Colonic mucosa (tissue), 4 donors: ENCODE measurements at regions of chr17 and their contacts with region 1.

Region 1: GRCh38 chr17:42428141-42428944 is 5.3 kb upstream of the CAVIN1 start:
- DNase-seq: peak; percentile 70
- H3K4me3 ChIP-seq: no peak overlapping the region
- H3K27ac ChIP-seq: no peak overlapping the region
- H3K4me1 ChIP-seq: no peaks in the 10 kb centered on the region
- H3K27me3 ChIP-seq: no peaks in the 10 kb centered on the region
- CTCF ChIP-seq: peak; percentile 74

Region 2: GRCh38 chr17:42484304-42484703 is 56.0 kb after region 1 on chr17:
- intact Hi-C with region 1: no loop called
- DNase-seq: peak; percentile 41
- H3K4me3 ChIP-seq: no peak overlapping the region
- H3K27ac ChIP-seq: no peak overlapping the region
- H3K4me1 ChIP-seq: no peaks in the 10 kb centered on the region
- H3K27me3 ChIP-seq: no peaks in the 10 kb centered on the region
- CTCF ChIP-seq: no peak

Region 3: GRCh38 chr17:42517516-42517915 is 89.2 kb after region 1 on chr17:
- intact Hi-C with region 1: loop called (anchors 2 kb)
- DNase-seq: peak; percentile 95
- H3K4me3 ChIP-seq: no peak overlapping the region
- H3K27ac ChIP-seq: peak overlapping the region; percentile 95
- H3K4me1 ChIP-seq: peaks cover 39% of the 10 kb centered on the region
- H3K27me3 ChIP-seq: no peaks in the 10 kb centered on the region
- CTCF ChIP-seq: peak; percentile 99